Caco-2 (cell line): ENCODE measurements at regions of chr17 and their contacts with region 1.

Region 1: GRCh38 chr17:42200702-42201101 is 6.4 kb upstream of the GHDC start:
- DNase-seq: no peak
- H3K4me3 ChIP-seq: no peak overlapping the region
- H3K4me3 Mint-ChIP-seq: no peak overlapping the region
- H3K27ac Mint-ChIP-seq: peak overlapping the region; percentile 1
- H3K4me1 ChIP-seq: peaks cover 11% of the 10 kb centered on the region
- H3K4me1 Mint-ChIP-seq: peaks cover 13% of the 10 kb centered on the region
- H3K27me3 ChIP-seq: no peaks in the 10 kb centered on the region
- H3K27me3 Mint-ChIP-seq: no peaks in the 10 kb centered on the region
- CTCF ChIP-seq: no peak

Region 2: DNA sequence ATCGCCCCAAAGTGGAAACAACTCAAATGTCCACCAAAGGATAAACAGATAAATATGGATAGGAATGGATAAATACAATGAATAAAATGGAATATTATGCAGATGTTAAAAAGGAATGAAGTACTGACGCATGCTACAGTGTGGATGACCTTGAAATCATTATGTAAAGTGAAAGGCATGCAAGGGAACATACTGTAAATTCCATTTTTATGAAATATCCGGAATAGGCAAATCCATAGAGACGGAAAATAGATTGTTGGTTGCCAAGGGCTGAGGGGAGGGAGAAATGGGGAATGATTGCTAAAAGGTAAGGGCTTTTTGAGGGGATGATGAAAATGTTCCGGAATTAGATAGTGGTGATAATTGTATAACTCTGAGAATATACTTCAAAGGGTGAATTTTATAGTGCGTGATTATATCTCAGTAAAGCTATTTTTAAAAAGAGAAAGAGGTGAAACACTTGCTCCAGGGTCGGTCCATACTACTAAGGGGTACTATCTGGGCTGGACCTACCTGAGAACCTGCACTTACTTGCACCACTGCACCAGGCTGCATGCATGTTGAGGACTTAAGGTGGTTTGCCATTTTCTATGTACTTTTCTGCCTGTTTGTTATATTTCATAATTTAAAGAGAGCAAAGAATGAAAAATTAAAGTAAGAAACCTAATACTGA is 39.6 kb after region 1 on chr17:
- CTCF ChIA-PET with region 1: interaction called, 3 read pairs
- POLR2A ChIA-PET with region 1: interaction called, 16 read pairs
- intact Hi-C with region 1: no loop called
- DNase-seq: no peak
- H3K4me3 ChIP-seq: no peak overlapping the region
- H3K4me3 Mint-ChIP-seq: no peak overlapping the region
- H3K27ac Mint-ChIP-seq: no peak overlapping the region
- H3K4me1 ChIP-seq: no peaks in the 10 kb centered on the region
- H3K4me1 Mint-ChIP-seq: no peaks in the 10 kb centered on the region
- H3K27me3 ChIP-seq: no peaks in the 10 kb centered on the region
- H3K27me3 Mint-ChIP-seq: no peaks in the 10 kb centered on the region
- CTCF ChIP-seq: no peak